ENCODE measurements at regions of chr7 and their contacts with region 1.

Region 1: DNA sequence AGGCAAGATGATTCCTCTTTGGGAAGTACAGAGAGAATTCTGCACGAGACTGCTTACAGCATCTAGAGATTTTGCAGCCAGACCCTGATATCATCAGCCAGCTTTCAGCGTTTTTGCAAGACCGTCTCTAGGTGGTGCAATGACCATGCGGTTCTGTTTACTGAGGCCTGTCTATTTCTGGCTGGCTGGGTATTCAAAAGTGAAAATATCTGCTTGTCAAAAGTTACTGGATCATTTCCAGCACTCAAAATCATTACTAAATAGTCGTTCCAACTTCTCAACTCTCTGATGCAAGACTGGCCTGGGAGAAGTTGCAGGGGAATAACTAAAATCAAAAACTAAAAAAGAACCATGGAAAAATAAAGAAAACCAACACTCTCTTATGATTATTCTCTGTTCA is 240.1 kb downstream of the ELMO1 start:
- DNase-seq: peak; percentile 26
- ATAC-seq: peak; percentile 92
- H3K4me3 ChIP-seq: no peak overlapping the region
- H3K27ac ChIP-seq: no peak overlapping the region
- H3K4me1 ChIP-seq: peaks cover 19% of the 10 kb centered on the region
- H3K27me3 ChIP-seq: no peaks in the 10 kb centered on the region; a peak in 1 of 4 replicates
- CTCF ChIP-seq: peak; percentile 60 to 90 (median 69); a peak in 5 of 6 replicates
- EP300 ChIP-seq: no peak
- POLR2A ChIP-seq: no peak
- RAD21 ChIP-seq: peak; percentile 87

Region 2: GRCh38 chr7:37342688-37343471 is 134.4 kb after region 1 on chr7:
- CTCF ChIA-PET with region 1: interaction called, 12 read pairs
- POLR2A ChIA-PET with region 1: no interaction called
- RAD21 ChIA-PET with region 1: no interaction called
- SMC1A ChIA-PET with region 1: interaction called, 6 read pairs
- in situ Hi-C with region 1: loop called (anchors 10 kb)
- intact Hi-C with region 1: no loop called
- DNase-seq: peak; percentile 69
- ATAC-seq: peak; percentile 70
- H3K4me3 ChIP-seq: peak overlapping the region; percentile 69
- H3K27ac ChIP-seq: peak overlapping the region; percentile 85
- H3K4me1 ChIP-seq: peaks cover 31% of the 10 kb centered on the region
- H3K27me3 ChIP-seq: no peaks in the 10 kb centered on the region
- CTCF ChIP-seq: peak; percentile 19 to 58 (median 41); a peak in 5 of 6 replicates
- EP300 ChIP-seq: no peak
- POLR2A ChIP-seq: peak; percentile 58; the same call in 1 of the 2 replicates
- RAD21 ChIP-seq: peak; percentile 57

Region 3: GRCh38 chr7:37495574-37496184 is 287.2 kb after region 1 on chr7:
- CTCF ChIA-PET with region 1: interaction called, 33 read pairs
- POLR2A ChIA-PET with region 1: no interaction called
- RAD21 ChIA-PET with region 1: interaction called, 16 read pairs
- SMC1A ChIA-PET with region 1: interaction called, 21 read pairs
- in situ Hi-C with region 1: no loop called
- intact Hi-C with region 1: loop called (anchors 10 kb)
- DNase-seq: no peak
- ATAC-seq: peak; percentile 58; the same call in 1 of the 3 replicates
- H3K4me3 ChIP-seq: no peak overlapping the region
- H3K27ac ChIP-seq: no peak overlapping the region
- H3K4me1 ChIP-seq: peaks cover 8% of the 10 kb centered on the region; the same call in 1 of the 2 replicates
- H3K27me3 ChIP-seq: no peaks in the 10 kb centered on the region
- CTCF ChIP-seq: peak; percentile 55 to 72 (median 62)
- EP300 ChIP-seq: no peak
- POLR2A ChIP-seq: no peak
- RAD21 ChIP-seq: peak; percentile 57

Region 4: GRCh38 chr7:37504801-37505200 is 296.3 kb after region 1 on chr7:
- CTCF ChIA-PET with region 1: interaction called, 6 read pairs
- POLR2A ChIA-PET with region 1: no interaction called
- RAD21 ChIA-PET with region 1: interaction called, 6 read pairs
- SMC1A ChIA-PET with region 1: interaction called, 3 read pairs
- in situ Hi-C with region 1: no loop called
- intact Hi-C with region 1: loop called (anchors 10 kb)
- DNase-seq: no peak
- ATAC-seq: no peak
- H3K4me3 ChIP-seq: no peak overlapping the region
- H3K27ac ChIP-seq: no peak overlapping the region
- H3K4me1 ChIP-seq: no peaks in the 10 kb centered on the region
- H3K27me3 ChIP-seq: peaks cover 0 to 2% of the 10 kb centered on the region in 2 experiments; a peak in 1 of 4 replicates
- CTCF ChIP-seq: no peak
- EP300 ChIP-seq: no peak
- POLR2A ChIP-seq: no peak
- RAD21 ChIP-seq: no peak

Region 5: GRCh38 chr7:37853474-37853873 is 644.9 kb after region 1 on chr7:
- CTCF ChIA-PET with region 1: interaction called, 9 read pairs
- POLR2A ChIA-PET with region 1: no interaction called
- RAD21 ChIA-PET with region 1: no interaction called
- SMC1A ChIA-PET with region 1: no interaction called
- in situ Hi-C with region 1: no loop called
- intact Hi-C with region 1: loop called (anchors 5 kb)
- DNase-seq: no peak
- ATAC-seq: peak; percentile 71
- H3K4me3 ChIP-seq: no peak overlapping the region
- H3K27ac ChIP-seq: no peak overlapping the region
- H3K4me1 ChIP-seq: no peaks in the 10 kb centered on the region
- H3K27me3 ChIP-seq: no peaks in the 10 kb centered on the region; a peak in 1 of 4 replicates
- CTCF ChIP-seq: peak; percentile 58 to 65 (median 62)
- EP300 ChIP-seq: no peak
- POLR2A ChIP-seq: no peak
- RAD21 ChIP-seq: peak; percentile 72